MCF 10A (cell line): ENCODE measurements at regions of chr12 and their contacts with region 1.

Region 1: DNA sequence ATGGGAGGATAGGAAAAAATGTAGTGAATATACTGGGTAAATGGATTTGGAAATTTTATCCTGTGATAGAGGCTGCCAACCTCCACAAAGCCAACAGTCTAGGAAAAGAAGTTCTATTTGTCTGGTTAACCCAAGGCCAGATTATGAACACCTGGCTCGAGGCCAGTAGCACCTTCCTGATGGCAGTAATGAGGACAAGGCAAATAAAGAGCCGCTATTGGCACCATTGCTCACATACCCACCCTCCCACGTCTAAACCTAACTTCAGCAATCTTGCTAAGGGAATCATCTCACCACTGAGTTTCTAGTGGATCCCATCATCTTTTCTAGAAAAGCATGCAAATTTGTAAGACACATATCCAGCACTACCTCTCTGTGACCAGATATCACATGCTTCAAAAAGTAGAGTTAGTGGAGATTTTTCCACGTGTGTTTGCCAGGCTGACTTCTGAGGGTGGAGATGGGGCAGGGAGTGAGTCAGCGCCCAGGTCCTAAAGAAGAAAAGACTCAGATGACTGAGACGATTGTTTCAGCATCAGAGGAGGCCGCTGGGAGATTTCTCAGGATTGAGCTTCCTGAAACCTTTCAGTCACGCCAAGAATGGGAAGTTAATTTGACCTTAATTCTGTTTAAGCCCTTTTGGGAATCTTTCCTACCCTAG is 362.9 kb downstream of the EMP1 start:
- DNase-seq: peak; percentile 14
- H3K4me3 Mint-ChIP-seq: no peak overlapping the region
- H3K27ac Mint-ChIP-seq: no peak overlapping the region
- H3K4me1 Mint-ChIP-seq: no peaks in the 10 kb centered on the region
- H3K27me3 Mint-ChIP-seq: no peaks in the 10 kb centered on the region
- CTCF ChIP-seq: no peak

Region 2: DNA sequence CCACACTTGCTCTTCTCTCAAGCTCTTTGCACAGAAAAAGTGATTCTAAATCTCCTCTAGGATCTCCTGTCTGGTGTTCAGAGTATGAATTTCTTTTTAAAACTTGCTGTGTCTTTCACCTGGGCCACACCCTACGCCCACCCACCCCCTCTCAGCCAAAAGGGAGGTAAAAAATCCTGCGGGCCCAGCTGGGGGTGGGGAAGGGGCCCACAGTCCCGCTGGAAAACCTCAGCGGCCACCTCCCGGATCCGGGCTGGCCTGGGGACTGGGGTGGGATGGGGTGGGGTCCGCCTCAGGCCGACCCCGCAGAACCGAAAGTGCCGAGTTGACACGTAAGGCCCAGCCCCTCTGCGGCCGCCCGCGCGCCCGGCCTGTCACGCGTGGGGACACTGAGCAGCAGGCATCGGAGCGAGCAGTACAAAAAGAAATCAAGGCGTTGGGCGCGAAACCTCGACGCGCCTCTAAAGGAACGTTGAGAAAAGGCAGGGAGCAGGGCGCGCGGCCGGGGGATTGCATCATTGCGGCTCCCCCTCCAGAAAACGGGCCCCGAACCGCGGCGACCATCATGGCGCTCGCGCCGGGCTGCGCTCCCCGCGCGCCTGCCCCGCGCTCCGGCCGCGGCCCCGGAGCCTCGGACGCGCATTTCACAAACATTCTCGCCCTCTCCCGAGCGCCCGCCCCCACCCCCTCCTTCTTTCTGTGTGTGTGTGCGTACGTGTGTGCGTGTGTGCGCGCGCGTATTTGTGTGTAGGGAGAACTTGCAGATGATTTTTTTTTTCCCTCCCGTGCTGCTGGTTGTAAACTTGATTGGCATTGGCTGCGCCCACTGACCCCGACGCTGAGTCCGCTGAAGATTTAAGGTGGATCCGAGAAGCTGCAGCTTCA is 834.5 kb before region 1 on chr12:
- CTCF ChIA-PET with region 1: no interaction called
- POLR2A ChIA-PET with region 1: no interaction called
- intact Hi-C with region 1: no loop called
- DNase-seq: peak; percentile 97
- H3K4me3 Mint-ChIP-seq: peak overlapping the region; percentile 98
- H3K27ac Mint-ChIP-seq: peak overlapping the region; percentile 99
- H3K4me1 Mint-ChIP-seq: peaks cover 18% of the 10 kb centered on the region
- H3K27me3 Mint-ChIP-seq: no peaks in the 10 kb centered on the region
- CTCF ChIP-seq: no peak

Region 3: DNA sequence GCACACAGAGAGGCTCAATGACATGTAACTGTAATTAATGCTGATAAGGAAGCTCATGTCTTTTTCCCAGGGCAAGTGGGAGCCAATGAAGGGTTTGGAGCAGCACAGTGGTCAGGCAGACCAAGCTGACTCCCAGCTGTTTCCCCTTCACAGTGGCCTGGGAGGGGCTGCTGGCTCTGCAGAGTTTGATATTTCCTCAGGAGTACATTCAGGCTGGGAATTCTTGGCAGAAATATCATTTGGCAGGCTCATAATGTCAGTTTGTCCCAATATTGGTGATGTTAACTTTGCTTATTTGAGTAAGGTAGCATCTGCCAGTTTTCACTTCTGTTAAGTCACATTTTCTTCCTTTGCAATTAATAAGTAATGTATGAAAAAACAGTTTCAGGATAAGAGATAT is 116.0 kb before region 1 on chr12:
- CTCF ChIA-PET with region 1: no interaction called
- POLR2A ChIA-PET with region 1: no interaction called
- intact Hi-C with region 1: no loop called
- DNase-seq: no peak
- H3K4me3 Mint-ChIP-seq: no peak overlapping the region
- H3K27ac Mint-ChIP-seq: no peak overlapping the region
- H3K4me1 Mint-ChIP-seq: no peaks in the 10 kb centered on the region
- H3K27me3 Mint-ChIP-seq: no peaks in the 10 kb centered on the region
- CTCF ChIP-seq: no peak

Region 4: DNA sequence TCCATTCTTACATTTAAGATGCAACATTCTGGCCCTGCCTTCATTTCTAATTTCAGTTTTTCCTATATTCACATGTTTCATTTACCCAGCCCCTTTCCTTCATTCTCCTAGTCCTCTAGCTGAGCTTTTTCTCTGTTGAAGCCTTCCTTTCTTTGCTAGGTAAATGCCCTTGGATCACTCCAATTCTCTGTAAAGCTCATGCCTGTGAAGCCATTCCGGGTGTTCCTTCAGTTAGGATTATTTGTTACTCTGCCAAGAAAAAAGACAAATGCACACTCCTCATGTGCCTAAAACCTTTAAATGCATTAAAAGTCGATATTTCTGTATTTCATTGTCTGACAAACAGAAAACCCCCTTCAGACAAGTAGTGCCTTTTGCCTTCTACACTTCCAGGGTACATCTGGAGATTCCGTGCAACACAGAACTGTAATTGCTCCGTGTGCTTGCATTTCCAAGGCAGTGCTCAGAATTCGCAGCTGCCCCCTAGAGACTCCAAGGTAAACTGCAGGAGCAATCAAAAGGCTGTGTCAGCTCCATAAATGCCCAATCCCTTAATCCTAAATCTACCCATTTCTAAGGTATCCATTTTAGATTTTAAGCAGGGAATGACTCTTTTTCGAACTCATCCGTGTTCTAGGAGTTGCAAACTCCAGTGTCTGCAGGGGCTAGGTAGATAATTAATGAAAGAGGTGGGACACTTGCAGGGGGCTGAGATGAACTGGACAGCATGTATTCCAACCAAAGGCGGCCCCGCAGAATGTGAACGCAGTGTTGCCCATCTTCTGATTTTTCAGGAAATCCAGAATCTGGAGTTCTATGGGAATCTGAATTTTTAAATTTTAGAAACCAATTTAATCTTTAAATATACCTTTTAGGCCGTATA is 101.8 kb after region 1 on chr12:
- CTCF ChIA-PET with region 1: no interaction called
- POLR2A ChIA-PET with region 1: no interaction called
- intact Hi-C with region 1: loop called (anchors 10 kb)
- DNase-seq: peak; percentile 62
- H3K4me3 Mint-ChIP-seq: no peak overlapping the region
- H3K27ac Mint-ChIP-seq: no peak overlapping the region
- H3K4me1 Mint-ChIP-seq: no peaks in the 10 kb centered on the region
- H3K27me3 Mint-ChIP-seq: peaks cover 32% of the 10 kb centered on the region
- CTCF ChIP-seq: peak; percentile 73